Activated CD8-positive, alpha-beta T cell treated with anti-CD3 and anti-CD28 coated beads, Interleukin-2, amount 10 ng/mL, durations not matched to agents 7 days and 5 days (primary cell): ENCODE measurements at regions of chr1 and their contacts with region 1.

Region 1: DNA sequence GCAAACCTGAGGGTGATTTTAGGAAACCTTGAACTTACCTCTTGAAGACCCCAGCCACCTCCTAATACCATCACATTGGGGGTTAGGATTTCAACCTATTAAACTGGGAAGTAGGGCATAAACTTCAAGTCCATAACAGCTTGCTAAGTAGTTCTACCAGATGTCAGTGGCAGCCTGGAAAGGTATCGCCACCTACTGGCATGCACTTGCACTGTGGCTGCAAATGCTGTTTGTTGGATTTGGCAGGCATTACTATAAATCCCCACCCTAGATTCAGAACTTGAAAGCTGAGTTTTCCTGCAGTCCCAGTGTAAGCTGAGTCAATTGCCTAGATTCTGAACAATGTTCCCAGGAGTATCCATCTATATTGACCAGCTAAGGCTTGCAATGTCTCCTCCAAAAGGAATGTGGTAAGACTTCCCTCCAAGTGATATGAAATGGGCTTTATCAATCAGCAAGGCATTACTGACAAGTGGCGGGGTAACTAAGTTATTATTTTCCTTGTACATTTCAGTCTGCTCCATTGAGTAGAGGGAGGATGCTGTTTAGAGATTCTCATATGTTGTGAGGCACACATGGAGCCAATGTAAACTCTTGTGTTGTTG is 474.5 kb downstream of the PTPRC start:
- DNase-seq: peak; percentile 77
- ATAC-seq: peak; percentile 72
- H3K4me3 Mint-ChIP-seq: no peak overlapping the region
- H3K27ac Mint-ChIP-seq: peak overlapping the region; percentile 15
- H3K4me1 Mint-ChIP-seq: peaks cover 14% of the 10 kb centered on the region
- H3K27me3 Mint-ChIP-seq: no peaks in the 10 kb centered on the region

Region 2: GRCh38 chr1:198937231-198938031 is 175.9 kb before region 1 on chr1:
- CTCF ChIA-PET with region 1: interaction called, 30 read pairs
- POLR2A ChIA-PET with region 1: interaction called, 12 read pairs
- DNase-seq: peak; percentile 82
- ATAC-seq: peak; percentile 92
- H3K4me3 Mint-ChIP-seq: no peak overlapping the region
- H3K27ac Mint-ChIP-seq: peak overlapping the region; percentile 88
- H3K4me1 Mint-ChIP-seq: peaks cover 21% of the 10 kb centered on the region
- H3K27me3 Mint-ChIP-seq: no peaks in the 10 kb centered on the region

Region 3: GRCh38 chr1:199089393-199090122 is 23.8 kb before region 1 on chr1:
- CTCF ChIA-PET with region 1: interaction called, 10 read pairs
- POLR2A ChIA-PET with region 1: no interaction called
- DNase-seq: peak; percentile 78
- ATAC-seq: peak; percentile 89
- H3K4me3 Mint-ChIP-seq: peak overlapping the region; percentile 29
- H3K27ac Mint-ChIP-seq: peak overlapping the region; percentile 75
- H3K4me1 Mint-ChIP-seq: peaks cover 46% of the 10 kb centered on the region
- H3K27me3 Mint-ChIP-seq: no peaks in the 10 kb centered on the region

Region 4: GRCh38 chr1:199123615-199124014 is 10.2 kb after region 1 on chr1:
- CTCF ChIA-PET with region 1: interaction called, 31 read pairs
- POLR2A ChIA-PET with region 1: no interaction called
- DNase-seq: no peak
- ATAC-seq: no peak
- H3K4me3 Mint-ChIP-seq: no peak overlapping the region
- H3K27ac Mint-ChIP-seq: no peak overlapping the region
- H3K4me1 Mint-ChIP-seq: peaks cover 12% of the 10 kb centered on the region
- H3K27me3 Mint-ChIP-seq: peaks cover 5% of the 10 kb centered on the region